CD8-positive, alpha-beta T cell (primary cell): ENCODE measurements at regions of chr20 and their contacts with region 1.

Region 1: GRCh38 chr20:3964719-3965118 is 50.6 kb downstream of the RNF24 start:
- DNase-seq: no peak
- ATAC-seq: no peak
- H3K4me3 ChIP-seq: no peak overlapping the region
- H3K4me3 Mint-ChIP-seq: no peak overlapping the region
- H3K27ac ChIP-seq: no peak overlapping the region
- H3K27ac Mint-ChIP-seq: no peak overlapping the region
- H3K4me1 ChIP-seq: no peaks in the 10 kb centered on the region
- H3K4me1 Mint-ChIP-seq: peaks cover 8% of the 10 kb centered on the region
- H3K27me3 ChIP-seq: no peaks in the 10 kb centered on the region
- H3K27me3 Mint-ChIP-seq: no peaks in the 10 kb centered on the region
- CTCF ChIP-seq: no peak

Region 2: GRCh38 chr20:3820048-3820900 is 144.4 kb before region 1 on chr20 and contains the start of gene AP5S1:
- CTCF ChIA-PET with region 1: no interaction called
- POLR2A ChIA-PET with region 1: no interaction called
- intact Hi-C with region 1: no loop called
- DNase-seq: peak; percentile 81 to 96 (median 89)
- ATAC-seq: peak; percentile 85
- H3K4me3 ChIP-seq: peak within 1 kb of the TSS; percentile 60 to 64
- H3K4me3 Mint-ChIP-seq: peak within 1 kb of the TSS; percentile 92
- H3K27ac ChIP-seq: peak within 1 kb of the TSS; percentile 92 to 97
- H3K27ac Mint-ChIP-seq: peak within 1 kb of the TSS; percentile 98
- H3K4me1 ChIP-seq: peaks cover 51% of the 10 kb centered on the region
- H3K4me1 Mint-ChIP-seq: peaks cover 51% of the 10 kb centered on the region
- H3K27me3 ChIP-seq: no peaks in the 10 kb centered on the region
- H3K27me3 Mint-ChIP-seq: no peaks in the 10 kb centered on the region
- CTCF ChIP-seq: peak; percentile 94
- total RNA-seq, gene AP5S1: 5.2 to 6.3 TPM

Region 3: GRCh38 chr20:3901028-3901705 is 63.6 kb before region 1 on chr20:
- CTCF ChIA-PET with region 1: no interaction called
- POLR2A ChIA-PET with region 1: no interaction called
- intact Hi-C with region 1: loop called in 1 of 2 experiments (anchors 10 kb)
- DNase-seq: no peak
- ATAC-seq: no peak
- H3K4me3 ChIP-seq: no peak overlapping the region
- H3K4me3 Mint-ChIP-seq: peak overlapping the region; percentile 30
- H3K27ac ChIP-seq: peak overlapping the region in 1 of 2 experiments; percentile 15
- H3K27ac Mint-ChIP-seq: peak overlapping the region; percentile 10
- H3K4me1 ChIP-seq: peaks cover 62% of the 10 kb centered on the region
- H3K4me1 Mint-ChIP-seq: peaks cover 75% of the 10 kb centered on the region
- H3K27me3 ChIP-seq: no peaks in the 10 kb centered on the region
- H3K27me3 Mint-ChIP-seq: no peaks in the 10 kb centered on the region
- CTCF ChIP-seq: no peak

Region 4: DNA sequence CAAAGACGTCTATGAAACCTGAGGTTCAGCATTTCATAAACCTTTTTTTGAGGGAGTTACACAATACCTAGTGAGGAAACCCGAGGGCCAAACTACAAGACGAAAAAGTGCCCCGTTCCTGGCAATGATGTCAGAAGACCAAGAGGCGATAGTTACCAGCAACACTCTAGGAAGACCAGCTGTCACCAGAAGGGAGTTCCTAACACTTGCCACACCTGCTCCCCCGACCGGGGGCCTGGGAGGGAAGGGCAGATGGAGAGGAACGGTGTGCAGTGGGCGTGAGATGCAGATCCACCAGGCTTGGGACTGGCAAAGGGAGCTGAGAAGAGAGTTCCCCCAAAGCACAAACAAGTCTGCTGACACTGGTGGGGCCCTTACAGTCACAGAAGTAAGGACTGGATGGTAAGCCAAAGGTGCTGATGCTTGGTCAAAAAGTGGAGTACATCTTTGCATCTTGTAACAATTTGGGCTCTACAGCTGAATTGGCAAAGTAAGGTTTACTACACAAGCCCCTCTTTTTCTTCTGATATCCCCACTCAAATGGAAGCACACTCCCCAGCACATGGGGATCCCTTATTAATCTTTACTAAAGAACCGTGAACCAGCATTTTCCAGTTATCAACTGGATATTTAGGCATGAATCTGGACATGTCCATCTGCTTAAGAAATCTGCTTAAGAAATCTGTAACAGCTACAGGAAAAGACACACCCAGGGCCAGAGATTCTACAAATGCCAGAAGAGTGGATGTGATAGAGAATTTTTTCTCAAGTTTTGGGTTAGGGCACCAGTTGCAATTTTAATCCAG is 37.0 kb before region 1 on chr20:
- CTCF ChIA-PET with region 1: no interaction called
- POLR2A ChIA-PET with region 1: no interaction called
- intact Hi-C with region 1: no loop called
- DNase-seq: no peak
- ATAC-seq: no peak
- H3K4me3 ChIP-seq: no peak overlapping the region
- H3K4me3 Mint-ChIP-seq: no peak overlapping the region
- H3K27ac ChIP-seq: peak overlapping the region in 1 of 2 experiments; percentile 2
- H3K27ac Mint-ChIP-seq: peak overlapping the region; percentile 20
- H3K4me1 ChIP-seq: peaks cover 12% of the 10 kb centered on the region
- H3K4me1 Mint-ChIP-seq: peaks cover 55% of the 10 kb centered on the region
- H3K27me3 ChIP-seq: no peaks in the 10 kb centered on the region
- H3K27me3 Mint-ChIP-seq: no peaks in the 10 kb centered on the region
- CTCF ChIP-seq: no peak